Endothelial cell of umbilical vein (primary cell): ENCODE measurements at regions of chr17 and their contacts with region 1.

Region 1: DNA sequence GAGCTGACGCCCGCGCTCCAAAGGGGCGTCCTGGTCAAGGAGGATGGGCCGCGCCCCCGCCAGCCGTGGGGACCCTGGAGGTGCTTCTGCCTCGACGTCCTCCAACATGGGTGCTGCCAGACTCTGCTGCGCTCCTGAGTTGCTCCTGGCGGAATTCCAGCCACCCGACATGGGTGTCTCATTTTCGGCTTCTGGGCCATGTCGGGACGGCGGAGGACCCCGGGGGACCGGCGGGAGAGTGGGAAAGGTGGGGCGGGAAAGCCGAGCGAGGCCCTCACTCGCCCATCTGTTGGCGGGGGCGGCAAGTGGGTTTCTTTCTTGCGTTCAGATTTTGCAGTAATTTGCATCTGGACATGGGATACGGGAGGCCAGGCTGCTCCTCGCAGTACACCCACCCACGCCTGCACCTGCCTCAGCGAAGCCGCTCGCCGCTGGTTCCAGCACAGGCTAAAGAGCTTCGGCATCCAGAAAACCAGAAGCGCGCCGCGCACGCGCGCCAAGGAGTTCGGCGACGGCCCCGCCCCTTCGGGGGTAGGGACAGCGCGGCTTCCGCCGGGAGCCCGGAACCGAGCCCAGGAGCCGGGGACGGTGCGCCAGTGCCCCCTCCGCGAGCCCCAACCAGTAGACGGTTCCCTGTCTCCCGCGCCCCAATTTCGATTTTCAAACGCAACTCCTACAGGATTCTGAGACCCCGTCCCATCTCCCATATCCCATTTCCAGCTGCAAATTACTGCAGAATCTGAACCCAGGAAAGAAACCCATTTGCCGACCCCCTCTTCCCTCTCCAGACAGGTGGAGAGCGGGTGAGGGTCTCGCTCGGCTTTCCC is at the start of gene ARMC7:
- DNase-seq: peak; percentile 81
- H3K4me3 ChIP-seq: peak within 1 kb of the TSS; percentile 71 to 74 (median 73)
- H3K27ac ChIP-seq: no peak within 1 kb of the TSS
- H3K4me1 ChIP-seq: peaks cover 24% of the 10 kb centered on the region
- H3K27me3 ChIP-seq: no peaks in the 10 kb centered on the region
- CTCF ChIP-seq: no peak
- POLR2A ChIP-seq: peak; percentile 92
- total RNA-seq, gene ARMC7: 14.5 and 15.7 TPM in 2 replicates

Region 2: GRCh38 chr17:74883041-74883745 is 226.4 kb before region 1 on chr17:
- CTCF ChIA-PET with region 1: no interaction called
- POLR2A ChIA-PET with region 1: no interaction called
- dilution Hi-C with region 1: no loop called
- intact Hi-C with region 1: no loop called
- DNase-seq: no peak
- H3K4me3 ChIP-seq: no peak overlapping the region
- H3K27ac ChIP-seq: no peak overlapping the region
- H3K4me1 ChIP-seq: no peaks in the 10 kb centered on the region
- H3K27me3 ChIP-seq: no peaks in the 10 kb centered on the region
- CTCF ChIP-seq: no peak
- POLR2A ChIP-seq: no peak

Region 3: GRCh38 chr17:75069783-75070182 is 39.8 kb before region 1 on chr17:
- CTCF ChIA-PET with region 1: interaction called, 80 read pairs
- POLR2A ChIA-PET with region 1: no interaction called
- dilution Hi-C with region 1: no loop called
- intact Hi-C with region 1: no loop called
- DNase-seq: peak; percentile 45
- H3K4me3 ChIP-seq: no peak overlapping the region
- H3K27ac ChIP-seq: no peak overlapping the region
- H3K4me1 ChIP-seq: peaks cover 6% of the 10 kb centered on the region
- H3K27me3 ChIP-seq: no peaks in the 10 kb centered on the region
- CTCF ChIP-seq: peak in 1 of 2 donors; percentile 23
- POLR2A ChIP-seq: no peak

Region 4: GRCh38 chr17:75096082-75096625 is 13.5 kb before region 1 on chr17:
- CTCF ChIA-PET with region 1: interaction called, 46 read pairs
- POLR2A ChIA-PET with region 1: interaction called, 3 read pairs
- dilution Hi-C with region 1: no loop called
- intact Hi-C with region 1: loop called (anchors 1 kb)
- DNase-seq: peak; percentile 88
- H3K4me3 ChIP-seq: no peak overlapping the region
- H3K27ac ChIP-seq: peak overlapping the region; percentile 53
- H3K4me1 ChIP-seq: peaks cover 11% of the 10 kb centered on the region
- H3K27me3 ChIP-seq: no peaks in the 10 kb centered on the region
- CTCF ChIP-seq: no peak
- POLR2A ChIP-seq: no peak

Region 5: GRCh38 chr17:75154195-75155106 is 44.8 kb after region 1 on chr17 and contains the start of gene JPT1:
- CTCF ChIA-PET with region 1: interaction called, 20 read pairs
- POLR2A ChIA-PET with region 1: interaction called, 3 read pairs
- dilution Hi-C with region 1: no loop called
- intact Hi-C with region 1: loop called (anchors 1 kb)
- DNase-seq: peak; percentile 99
- H3K4me3 ChIP-seq: peak within 1 kb of the TSS; percentile 57 to 83 (median 62)
- H3K27ac ChIP-seq: peak within 1 kb of the TSS; percentile 60
- H3K4me1 ChIP-seq: peaks cover 27% of the 10 kb centered on the region
- H3K27me3 ChIP-seq: no peaks in the 10 kb centered on the region
- CTCF ChIP-seq: no peak
- POLR2A ChIP-seq: peak; percentile 100
- total RNA-seq, gene JPT1: 352 and 364 TPM in 2 replicates

Region 6: GRCh38 chr17:75191584-75191983 is 82.0 kb after region 1 on chr17:
- CTCF ChIA-PET with region 1: interaction called, 11 read pairs
- POLR2A ChIA-PET with region 1: no interaction called
- dilution Hi-C with region 1: no loop called
- intact Hi-C with region 1: no loop called
- DNase-seq: no peak
- H3K4me3 ChIP-seq: no peak overlapping the region
- H3K27ac ChIP-seq: no peak overlapping the region
- H3K4me1 ChIP-seq: no peaks in the 10 kb centered on the region
- H3K27me3 ChIP-seq: no peaks in the 10 kb centered on the region
- CTCF ChIP-seq: no peak
- POLR2A ChIP-seq: no peak

Region 7: GRCh38 chr17:75250009-75250471 is 140.4 kb after region 1 on chr17:
- CTCF ChIA-PET with region 1: no interaction called
- POLR2A ChIA-PET with region 1: no interaction called
- dilution Hi-C with region 1: no loop called
- intact Hi-C with region 1: no loop called
- DNase-seq: peak; percentile 85
- H3K4me3 ChIP-seq: peak overlapping the region in 2 of 3 experiments; percentile 12 to 33
- H3K27ac ChIP-seq: peak overlapping the region; percentile 31
- H3K4me1 ChIP-seq: peaks cover 11% of the 10 kb centered on the region
- H3K27me3 ChIP-seq: no peaks in the 10 kb centered on the region
- CTCF ChIP-seq: no peak
- POLR2A ChIP-seq: no peak

Region 8: DNA sequence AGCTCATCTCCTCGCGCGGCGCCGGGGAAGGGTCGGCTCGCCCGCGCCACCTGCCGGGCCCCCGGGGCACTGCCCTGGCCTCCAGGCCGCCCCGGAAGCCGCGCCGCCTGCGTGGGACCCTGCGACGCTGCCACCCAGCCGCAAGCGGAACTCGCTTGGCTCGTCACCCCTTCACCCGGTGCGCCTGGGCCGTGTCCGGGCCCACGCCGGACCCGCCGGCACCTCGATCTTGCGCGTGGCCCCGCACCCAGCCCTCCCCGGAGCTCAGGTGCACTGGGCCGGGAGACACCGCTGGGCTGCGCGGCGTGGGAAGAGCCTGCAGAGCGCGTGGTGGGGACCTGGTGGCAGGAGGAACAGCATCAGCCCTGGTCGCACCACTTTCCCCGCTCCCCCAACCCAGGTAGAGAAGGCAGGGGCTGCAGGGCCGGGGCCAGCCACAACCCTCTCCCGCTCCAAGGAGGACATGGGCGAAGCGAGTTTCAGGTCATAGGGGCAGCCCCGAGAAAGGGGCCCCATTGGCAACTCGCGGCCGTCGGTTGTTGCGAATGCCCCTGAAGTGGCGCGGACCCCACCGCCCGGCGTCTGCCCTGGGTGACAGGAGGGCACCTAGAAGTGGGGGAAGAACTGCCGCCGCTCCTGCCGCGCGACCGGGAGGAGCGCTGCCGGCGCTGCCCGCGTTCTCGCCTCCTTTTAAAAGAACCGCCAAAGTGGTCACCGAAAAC is 161.8 kb after region 1 on chr17:
- CTCF ChIA-PET with region 1: interaction called, 17 read pairs
- POLR2A ChIA-PET with region 1: no interaction called
- dilution Hi-C with region 1: no loop called
- intact Hi-C with region 1: no loop called
- DNase-seq: peak; percentile 54
- H3K4me3 ChIP-seq: peak overlapping the region; percentile 57 to 89 (median 61)
- H3K27ac ChIP-seq: peak overlapping the region; percentile 50
- H3K4me1 ChIP-seq: peaks cover 32% of the 10 kb centered on the region
- H3K27me3 ChIP-seq: no peaks in the 10 kb centered on the region
- CTCF ChIP-seq: peak; percentile 60 to 82
- POLR2A ChIP-seq: no peak

Region 9: GRCh38 chr17:75950821-75951554 is 841.4 kb after region 1 on chr17:
- CTCF ChIA-PET with region 1: no interaction called
- POLR2A ChIA-PET with region 1: no interaction called
- dilution Hi-C with region 1: no loop called
- intact Hi-C with region 1: no loop called
- DNase-seq: peak; percentile 34
- H3K4me3 ChIP-seq: no peak overlapping the region
- H3K27ac ChIP-seq: no peak overlapping the region
- H3K4me1 ChIP-seq: peaks cover 13% of the 10 kb centered on the region
- H3K27me3 ChIP-seq: no peaks in the 10 kb centered on the region
- CTCF ChIP-seq: no peak
- POLR2A ChIP-seq: no peak